Caco-2 (cell line): ENCODE measurements at regions of chr6 and their contacts with region 1.

Region 1: DNA sequence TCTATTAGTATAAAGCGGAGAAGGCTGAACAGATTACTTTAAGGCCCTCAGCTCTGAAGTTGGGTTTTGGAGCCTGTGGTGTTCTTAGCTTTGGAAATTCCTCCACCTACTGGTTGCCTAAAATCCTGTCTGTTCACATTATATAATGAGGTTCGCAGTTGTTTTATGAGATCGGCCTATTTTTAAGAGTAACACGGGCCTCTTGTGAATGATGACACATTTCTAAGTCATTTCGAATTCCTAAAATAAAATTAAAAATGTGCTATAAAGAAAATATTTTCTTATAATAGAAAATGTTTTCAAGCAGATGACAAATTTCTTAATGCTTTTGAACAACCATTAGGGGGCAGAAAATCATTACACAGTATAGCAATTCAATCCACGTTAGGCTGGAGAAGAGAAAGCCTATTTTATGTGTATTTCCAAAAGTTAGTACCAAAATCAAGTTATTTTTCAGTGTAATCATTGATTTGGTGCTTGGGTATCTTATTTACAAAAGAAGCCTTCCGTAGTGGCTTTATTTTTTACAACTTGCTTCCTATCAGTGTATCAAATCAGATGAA is 15.8 kb upstream of the FAM8A1 start:
- DNase-seq: peak in 1 of 2 experiments; percentile 54
- H3K4me3 ChIP-seq: no peak overlapping the region
- H3K4me3 Mint-ChIP-seq: no peak overlapping the region
- H3K27ac Mint-ChIP-seq: no peak overlapping the region
- H3K4me1 ChIP-seq: no peaks in the 10 kb centered on the region
- H3K4me1 Mint-ChIP-seq: peaks cover 12% of the 10 kb centered on the region
- H3K27me3 ChIP-seq: no peaks in the 10 kb centered on the region
- H3K27me3 Mint-ChIP-seq: no peaks in the 10 kb centered on the region
- CTCF ChIP-seq: peak; percentile 62 to 87

Region 2: DNA sequence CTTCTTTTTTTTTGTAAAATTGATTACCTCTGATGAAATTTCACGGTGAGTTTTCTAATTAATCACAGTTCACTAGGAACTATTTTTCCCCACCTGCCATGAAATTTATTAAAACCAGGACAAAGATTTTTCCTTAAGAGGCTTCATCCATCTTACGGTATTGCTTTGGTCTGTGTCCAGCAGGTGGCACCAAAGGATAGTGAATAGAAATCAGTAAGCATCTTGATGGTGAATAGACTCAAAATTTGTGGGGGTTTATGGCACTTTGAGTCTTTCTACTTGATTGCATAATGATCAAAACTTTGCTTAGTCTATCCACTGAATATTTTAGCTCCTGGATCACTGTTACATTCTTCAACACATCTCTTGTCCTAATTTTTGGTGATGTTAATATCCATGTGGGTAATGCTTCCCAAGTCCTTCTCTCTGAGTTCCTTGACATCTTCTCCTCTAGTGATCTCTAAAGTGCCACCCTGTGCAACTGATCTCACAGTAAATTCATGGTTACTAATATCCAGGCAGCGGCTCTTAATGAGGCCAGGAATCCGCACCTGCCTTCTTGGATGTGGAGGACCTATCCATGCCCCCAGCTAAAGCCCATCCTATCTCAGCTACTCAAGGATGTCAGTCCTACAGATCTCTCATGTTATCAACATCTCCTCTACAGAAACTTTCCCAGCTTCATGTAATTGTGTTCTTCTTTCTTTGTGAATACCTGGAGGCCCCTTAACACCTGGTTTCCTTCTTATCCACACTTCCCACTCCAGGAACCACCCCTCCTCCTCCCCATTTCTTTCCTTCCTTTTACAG is 428.0 kb before region 1 on chr6:
- CTCF ChIA-PET with region 1: interaction called, 7 read pairs
- POLR2A ChIA-PET with region 1: no interaction called
- intact Hi-C with region 1: loop called (anchors 1 kb)
- DNase-seq: peak; percentile 47 to 70
- H3K4me3 ChIP-seq: no peak overlapping the region
- H3K4me3 Mint-ChIP-seq: no peak overlapping the region
- H3K27ac Mint-ChIP-seq: no peak overlapping the region
- H3K4me1 ChIP-seq: no peaks in the 10 kb centered on the region
- H3K4me1 Mint-ChIP-seq: no peaks in the 10 kb centered on the region
- H3K27me3 ChIP-seq: no peaks in the 10 kb centered on the region
- H3K27me3 Mint-ChIP-seq: peaks cover 4% of the 10 kb centered on the region
- CTCF ChIP-seq: peak; percentile 61 to 65

Region 3: GRCh38 chr6:17281100-17281494 is 303.2 kb before region 1 on chr6 and contains the start of gene RBM24:
- CTCF ChIA-PET with region 1: no interaction called
- POLR2A ChIA-PET with region 1: no interaction called
- intact Hi-C with region 1: loop called (anchors 1 kb)
- DNase-seq: peak; percentile 71 to 75
- H3K4me3 ChIP-seq: peak within 1 kb of the TSS; percentile 69
- H3K4me3 Mint-ChIP-seq: peak within 1 kb of the TSS; percentile 81
- H3K27ac Mint-ChIP-seq: no peak within 1 kb of the TSS
- H3K4me1 ChIP-seq: peaks cover 9% of the 10 kb centered on the region
- H3K4me1 Mint-ChIP-seq: no peaks in the 10 kb centered on the region
- H3K27me3 ChIP-seq: peaks cover 2% of the 10 kb centered on the region
- H3K27me3 Mint-ChIP-seq: peaks cover 3% of the 10 kb centered on the region
- CTCF ChIP-seq: peak in 1 of 2 experiments; percentile 61
- total RNA-seq, gene RBM24: not detected in 2 replicates

Region 4: GRCh38 chr6:17469006-17469832 is 115.1 kb before region 1 on chr6:
- CTCF ChIA-PET with region 1: no interaction called
- POLR2A ChIA-PET with region 1: no interaction called
- intact Hi-C with region 1: loop called (anchors 10 kb)
- DNase-seq: no peak
- H3K4me3 ChIP-seq: no peak overlapping the region
- H3K4me3 Mint-ChIP-seq: no peak overlapping the region
- H3K27ac Mint-ChIP-seq: no peak overlapping the region
- H3K4me1 ChIP-seq: 0 out of 2 replicates have a peak, but pooled peaks cover 15% of the 10 kb centered on the region
- H3K4me1 Mint-ChIP-seq: peaks cover 7% of the 10 kb centered on the region
- H3K27me3 ChIP-seq: no peaks in the 10 kb centered on the region
- H3K27me3 Mint-ChIP-seq: no peaks in the 10 kb centered on the region
- CTCF ChIP-seq: no peak

Region 5: GRCh38 chr6:17565399-17565798 is 18.9 kb before region 1 on chr6:
- CTCF ChIA-PET with region 1: no interaction called
- POLR2A ChIA-PET with region 1: no interaction called
- intact Hi-C with region 1: no loop called
- DNase-seq: no peak
- H3K4me3 ChIP-seq: no peak overlapping the region
- H3K4me3 Mint-ChIP-seq: no peak overlapping the region
- H3K27ac Mint-ChIP-seq: no peak overlapping the region
- H3K4me1 ChIP-seq: no peaks in the 10 kb centered on the region
- H3K4me1 Mint-ChIP-seq: no peaks in the 10 kb centered on the region
- H3K27me3 ChIP-seq: no peaks in the 10 kb centered on the region
- H3K27me3 Mint-ChIP-seq: no peaks in the 10 kb centered on the region
- CTCF ChIP-seq: no peak

Region 6: GRCh38 chr6:17803409-17803808 is 219.1 kb after region 1 on chr6:
- CTCF ChIA-PET with region 1: no interaction called
- POLR2A ChIA-PET with region 1: no interaction called
- intact Hi-C with region 1: loop called (anchors 5 kb)
- DNase-seq: no peak
- H3K4me3 ChIP-seq: no peak overlapping the region
- H3K4me3 Mint-ChIP-seq: no peak overlapping the region
- H3K27ac Mint-ChIP-seq: no peak overlapping the region
- H3K4me1 ChIP-seq: peaks cover 13% of the 10 kb centered on the region
- H3K4me1 Mint-ChIP-seq: peaks cover 7% of the 10 kb centered on the region
- H3K27me3 ChIP-seq: no peaks in the 10 kb centered on the region
- H3K27me3 Mint-ChIP-seq: no peaks in the 10 kb centered on the region
- CTCF ChIP-seq: no peak

Region 7: GRCh38 chr6:17820055-17820454 is 235.7 kb after region 1 on chr6:
- CTCF ChIA-PET with region 1: interaction called, 12 read pairs
- POLR2A ChIA-PET with region 1: no interaction called
- intact Hi-C with region 1: loop called (anchors 1 kb)
- DNase-seq: peak in 1 of 2 experiments; percentile 9
- H3K4me3 ChIP-seq: no peak overlapping the region
- H3K4me3 Mint-ChIP-seq: no peak overlapping the region
- H3K27ac Mint-ChIP-seq: no peak overlapping the region
- H3K4me1 ChIP-seq: peaks cover 17% of the 10 kb centered on the region
- H3K4me1 Mint-ChIP-seq: peaks cover 14% of the 10 kb centered on the region
- H3K27me3 ChIP-seq: no peaks in the 10 kb centered on the region
- H3K27me3 Mint-ChIP-seq: no peaks in the 10 kb centered on the region
- CTCF ChIP-seq: peak in 1 of 2 experiments; percentile 5